Mammary epithelial cell (primary cell): ENCODE measurements at regions of chr17 and their contacts with region 1.

Region 1: DNA sequence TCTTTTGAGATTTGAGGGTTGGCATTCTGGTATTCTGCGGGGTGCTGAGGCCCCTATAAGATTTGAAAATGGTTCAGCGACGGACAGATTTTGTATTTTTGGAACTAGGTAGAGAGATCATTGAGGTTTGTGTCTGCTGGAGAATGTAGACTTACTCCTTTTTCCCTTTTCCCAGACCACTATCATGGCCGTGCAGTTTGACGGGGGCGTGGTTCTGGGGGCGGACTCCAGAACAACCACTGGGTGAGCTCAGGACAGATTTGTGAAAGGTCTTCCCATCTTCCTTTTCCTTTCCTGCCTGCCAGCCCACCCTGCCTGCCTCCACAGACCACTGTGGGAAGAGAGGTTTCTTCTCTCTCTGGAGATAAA is 573 bp downstream of the PSMB6 start:
- DNase-seq: peak; percentile 27
- H3K4me3 ChIP-seq: peak overlapping the region; percentile 84 to 96 (median 85)
- H3K27ac ChIP-seq: peak overlapping the region; percentile 74
- H3K4me1 ChIP-seq: peaks cover 7% of the 10 kb centered on the region
- H3K27me3 ChIP-seq: no peaks in the 10 kb centered on the region
- CTCF ChIP-seq: no peak

Region 2: GRCh38 chr17:4721203-4722135 is 75.1 kb before region 1 on chr17:
- CTCF ChIA-PET with region 1: no interaction called
- dilution Hi-C with region 1: loop called (anchors 5 kb)
- in situ Hi-C with region 1: no loop called
- intact Hi-C with region 1: no loop called
- DNase-seq: no peak
- H3K4me3 ChIP-seq: no peak overlapping the region
- H3K27ac ChIP-seq: no peak overlapping the region
- H3K4me1 ChIP-seq: peaks cover 4% of the 10 kb centered on the region
- H3K27me3 ChIP-seq: no peaks in the 10 kb centered on the region
- CTCF ChIP-seq: no peak

Region 3: GRCh38 chr17:4806777-4807604 is 10.5 kb after region 1 on chr17 and contains the start of gene PLD2:
- CTCF ChIA-PET with region 1: no interaction called
- dilution Hi-C with region 1: no loop called
- in situ Hi-C with region 1: no loop called
- intact Hi-C with region 1: loop called (anchors 1 kb)
- DNase-seq: peak; percentile 79
- H3K4me3 ChIP-seq: peak within 1 kb of the TSS; percentile 75 to 94 (median 83)
- H3K27ac ChIP-seq: peak within 1 kb of the TSS; percentile 22
- H3K4me1 ChIP-seq: peaks cover 15% of the 10 kb centered on the region
- H3K27me3 ChIP-seq: no peaks in the 10 kb centered on the region
- CTCF ChIP-seq: no peak
- total RNA-seq, gene PLD2: 22.2 to 42.9 TPM

Region 4: DNA sequence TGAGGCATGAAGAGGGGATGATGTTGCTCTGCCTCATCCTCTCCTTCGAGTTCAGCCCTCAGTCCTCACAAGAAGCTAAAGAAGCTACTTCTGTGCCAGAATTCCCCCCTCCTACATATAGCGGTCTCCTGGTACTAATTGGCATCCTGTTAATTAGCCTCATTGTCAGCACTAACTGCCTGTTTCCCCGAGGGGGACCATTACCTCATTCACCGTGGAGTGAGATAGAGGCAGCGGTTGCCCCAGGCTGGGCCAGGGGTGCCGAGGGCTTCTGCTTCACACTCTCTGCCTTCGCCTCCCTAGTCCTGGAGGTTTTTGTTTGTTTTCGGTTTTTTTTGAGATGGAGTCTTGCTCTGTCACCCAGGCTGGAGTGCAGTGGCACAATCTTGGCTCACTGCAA is 30.9 kb after region 1 on chr17:
- CTCF ChIA-PET with region 1: no interaction called
- dilution Hi-C with region 1: no loop called
- in situ Hi-C with region 1: no loop called
- intact Hi-C with region 1: no loop called
- DNase-seq: no peak
- H3K4me3 ChIP-seq: no peak overlapping the region
- H3K27ac ChIP-seq: no peak overlapping the region
- H3K4me1 ChIP-seq: no peaks in the 10 kb centered on the region
- H3K27me3 ChIP-seq: no peaks in the 10 kb centered on the region
- CTCF ChIP-seq: no peak

Region 5: DNA sequence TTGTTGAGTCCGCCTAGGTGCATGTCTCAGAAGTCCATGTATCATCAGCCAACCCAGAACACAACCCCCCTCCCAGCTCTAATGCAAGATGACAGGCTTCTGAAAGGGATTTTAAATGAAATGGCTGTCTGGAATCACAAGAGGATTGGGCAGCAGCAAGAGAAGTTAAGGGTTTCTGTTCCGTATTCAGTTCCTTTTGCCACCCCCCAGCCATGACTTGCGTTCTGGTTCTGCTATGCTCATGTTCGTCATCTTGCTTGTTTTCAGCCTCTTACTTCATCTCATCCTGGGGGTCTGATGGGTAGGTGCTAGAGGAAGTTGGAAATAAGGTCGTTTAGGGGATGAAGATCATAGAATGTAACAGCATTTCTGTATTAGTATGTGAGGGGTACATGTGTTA is 48.6 kb after region 1 on chr17:
- CTCF ChIA-PET with region 1: no interaction called
- dilution Hi-C with region 1: no loop called
- in situ Hi-C with region 1: no loop called
- intact Hi-C with region 1: no loop called
- DNase-seq: no peak
- H3K4me3 ChIP-seq: no peak overlapping the region
- H3K27ac ChIP-seq: no peak overlapping the region
- H3K4me1 ChIP-seq: peaks cover 43% of the 10 kb centered on the region
- H3K27me3 ChIP-seq: no peaks in the 10 kb centered on the region
- CTCF ChIP-seq: no peak

Region 6: GRCh38 chr17:4858882-4859260 is 62.3 kb after region 1 on chr17:
- CTCF ChIA-PET with region 1: no interaction called
- dilution Hi-C with region 1: loop called (anchors 5 kb)
- in situ Hi-C with region 1: no loop called
- intact Hi-C with region 1: loop called (anchors 2 kb)
- DNase-seq: peak; percentile 93
- H3K4me3 ChIP-seq: peak overlapping the region; percentile 50 to 91 (median 78)
- H3K27ac ChIP-seq: peak overlapping the region; percentile 83
- H3K4me1 ChIP-seq: peaks cover 60% of the 10 kb centered on the region
- H3K27me3 ChIP-seq: no peaks in the 10 kb centered on the region
- CTCF ChIP-seq: no peak

Region 7: DNA sequence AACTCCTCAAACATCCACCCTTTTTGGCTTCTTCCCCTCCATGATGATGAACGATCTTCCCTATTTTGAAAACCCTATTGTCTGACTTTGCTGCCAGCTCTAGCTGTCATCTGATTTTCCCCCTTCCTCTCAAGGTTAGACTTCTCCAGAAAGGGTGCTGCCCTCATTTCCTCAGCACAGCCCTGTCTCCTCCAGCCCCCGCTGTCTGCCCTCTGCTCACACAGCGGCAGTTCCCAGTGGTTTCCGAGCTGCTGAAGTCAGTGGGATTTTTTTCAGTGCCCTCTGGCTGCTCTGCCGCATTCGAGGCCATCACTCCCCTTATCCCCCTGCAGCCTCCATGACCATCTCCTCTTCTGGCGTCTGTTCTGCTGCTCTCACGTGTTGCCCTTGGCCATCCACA is 76.2 kb after region 1 on chr17:
- CTCF ChIA-PET with region 1: no interaction called
- dilution Hi-C with region 1: no loop called
- in situ Hi-C with region 1: loop called in 1 of 2 experiments (anchors 5 kb)
- intact Hi-C with region 1: no loop called
- DNase-seq: no peak
- H3K4me3 ChIP-seq: no peak overlapping the region
- H3K27ac ChIP-seq: no peak overlapping the region
- H3K4me1 ChIP-seq: peaks cover 8% of the 10 kb centered on the region
- H3K27me3 ChIP-seq: no peaks in the 10 kb centered on the region
- CTCF ChIP-seq: no peak